ENCODE measurements at regions of chr15 and their contacts with region 1.

Region 1: GRCh38 chr15:101501703-101502373 is 12.3 kb upstream of the PCSK6 start:
- DNase-seq: peak in 2 of 5 donors; percentile 56 to 61
- ATAC-seq: peak; percentile 32 to 58 (median 52)
- H3K4me3 ChIP-seq: peak overlapping the region in 3 of 12 donors; percentile 2 to 13 (median 4)
- H3K27ac ChIP-seq: peak overlapping the region in 4 of 12 donors; percentile 71 to 84 (median 77)
- H3K4me1 ChIP-seq: peaks cover 0 to 38% (median 10%) of the 10 kb centered on the region in 12 donors
- H3K27me3 ChIP-seq: peaks cover 0 to 15% (median 0%) of the 10 kb centered on the region in 9 donors
- CTCF ChIP-seq: peak; percentile 28 to 66 (median 52)
- POLR2A ChIP-seq: no peak

Region 2: DNA sequence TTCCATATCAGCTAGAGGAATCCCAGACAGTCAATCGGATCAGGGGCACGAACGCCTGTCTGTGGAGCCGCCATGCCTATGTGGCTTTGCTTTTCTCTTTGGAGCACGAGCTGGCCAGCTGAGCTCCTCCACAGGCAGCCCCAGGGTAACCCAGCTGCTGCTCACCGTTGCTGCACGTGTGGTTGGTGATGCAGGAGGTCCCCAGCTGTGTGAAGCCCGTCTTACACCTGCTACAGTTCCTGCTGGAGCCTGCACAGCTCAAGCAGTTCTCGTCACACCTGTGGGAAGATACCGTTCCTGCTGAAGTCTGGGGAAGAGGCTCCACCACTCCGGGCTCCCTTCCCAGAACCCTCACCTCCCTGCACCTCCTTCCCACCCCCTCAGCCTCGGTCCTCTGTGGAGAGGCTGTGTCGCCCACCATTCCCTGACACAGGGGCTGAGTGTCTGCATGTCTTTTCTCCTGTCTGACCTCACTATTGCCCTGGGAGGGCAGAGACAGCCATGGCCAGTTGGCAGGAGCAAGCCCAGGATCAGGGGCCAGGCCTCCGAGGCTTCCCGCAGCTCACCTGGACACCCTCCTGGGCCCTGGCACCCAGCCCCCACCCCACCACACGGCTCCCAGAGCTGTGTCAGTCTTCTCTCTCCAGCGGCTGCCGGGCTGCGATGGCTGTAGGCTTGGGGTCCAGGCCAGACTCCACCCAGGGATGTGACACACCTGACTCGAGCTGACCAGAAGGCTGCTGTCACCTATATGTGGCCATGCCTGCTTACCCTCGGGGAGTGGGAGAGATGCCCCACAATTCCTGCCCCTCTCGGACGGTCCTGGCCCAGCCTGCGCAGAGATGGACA is 194.6 kb before region 1 on chr15:
- intact Hi-C with region 1: loop called in 6 of 10 experiments (anchors 5 to 10 kb)
- DNase-seq: peak in 1 of 5 donors; percentile 4
- ATAC-seq: peak in 1 of 4 donors; percentile 17
- H3K4me3 ChIP-seq: no peak overlapping the region
- H3K27ac ChIP-seq: no peak overlapping the region
- H3K4me1 ChIP-seq: no peaks in the 10 kb centered on the region
- H3K27me3 ChIP-seq: peaks cover 0 to 7% (median 0%) of the 10 kb centered on the region in 9 donors
- CTCF ChIP-seq: no peak
- POLR2A ChIP-seq: no peak

Region 3: GRCh38 chr15:101358895-101359294 is 142.9 kb before region 1 on chr15:
- intact Hi-C with region 1: loop called in 3 of 10 experiments (anchors 5 kb)
- DNase-seq: peak in 3 of 5 donors; percentile 58 to 77 (median 71)
- ATAC-seq: peak; percentile 79 to 86 (median 82)
- H3K4me3 ChIP-seq: no peak overlapping the region
- H3K27ac ChIP-seq: peak overlapping the region in 7 of 12 donors; percentile 16 to 76 (median 60)
- H3K4me1 ChIP-seq: peaks cover 0 to 27% (median 7%) of the 10 kb centered on the region in 12 donors
- H3K27me3 ChIP-seq: no peaks in the 10 kb centered on the region
- CTCF ChIP-seq: no peak
- POLR2A ChIP-seq: no peak

Region 4: DNA sequence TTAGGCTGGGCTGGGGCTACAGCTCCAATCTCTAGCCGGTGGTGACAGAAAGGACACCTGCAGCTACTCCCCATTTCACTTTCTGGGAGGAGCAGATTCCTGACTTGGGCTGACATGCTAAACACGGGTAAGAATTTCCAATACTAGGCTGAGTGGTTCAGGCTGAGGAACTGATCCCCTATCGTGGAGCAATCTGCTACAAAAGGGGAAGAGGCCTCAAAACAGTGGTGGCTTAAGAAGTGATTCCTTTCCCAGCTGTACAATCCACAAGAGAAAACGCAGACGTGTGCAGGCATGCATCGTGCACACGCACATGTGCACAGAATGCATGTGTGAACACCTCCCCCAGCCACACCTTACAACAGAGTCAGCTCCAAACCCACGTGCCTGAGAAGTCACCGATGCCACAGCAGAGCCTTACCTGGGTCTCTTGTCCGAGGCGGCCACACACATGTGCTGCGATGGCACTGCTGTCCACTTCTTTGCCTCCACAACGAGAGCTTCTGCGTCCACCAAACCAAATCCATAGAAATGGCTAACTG is 120.1 kb before region 1 on chr15:
- intact Hi-C with region 1: loop called in 1 of 10 experiments (anchors 5 kb)
- DNase-seq: no peak
- ATAC-seq: no peak
- H3K4me3 ChIP-seq: no peak overlapping the region
- H3K27ac ChIP-seq: no peak overlapping the region
- H3K4me1 ChIP-seq: no peaks in the 10 kb centered on the region
- H3K27me3 ChIP-seq: no peaks in the 10 kb centered on the region
- CTCF ChIP-seq: no peak
- POLR2A ChIP-seq: no peak

Region 5: GRCh38 chr15:101469520-101470288 is 32.1 kb before region 1 on chr15:
- intact Hi-C with region 1: loop called in 1 of 10 experiments (anchors 1 kb)
- DNase-seq: peak in 2 of 5 donors; percentile 58 to 59
- ATAC-seq: peak; percentile 75 to 85 (median 84)
- H3K4me3 ChIP-seq: peak overlapping the region in 4 of 12 donors; percentile 1 to 35 (median 10)
- H3K27ac ChIP-seq: peak overlapping the region in 11 of 12 donors; percentile 27 to 84 (median 75)
- H3K4me1 ChIP-seq: peaks cover 0 to 25% (median 8%) of the 10 kb centered on the region in 12 donors
- H3K27me3 ChIP-seq: peaks cover 0 to 4% (median 0%) of the 10 kb centered on the region in 9 donors
- CTCF ChIP-seq: no peak
- POLR2A ChIP-seq: peak in 1 of 2 donors; percentile 10